ENCODE measurements at regions of chr2 and their contacts with region 1.

Region 1: DNA sequence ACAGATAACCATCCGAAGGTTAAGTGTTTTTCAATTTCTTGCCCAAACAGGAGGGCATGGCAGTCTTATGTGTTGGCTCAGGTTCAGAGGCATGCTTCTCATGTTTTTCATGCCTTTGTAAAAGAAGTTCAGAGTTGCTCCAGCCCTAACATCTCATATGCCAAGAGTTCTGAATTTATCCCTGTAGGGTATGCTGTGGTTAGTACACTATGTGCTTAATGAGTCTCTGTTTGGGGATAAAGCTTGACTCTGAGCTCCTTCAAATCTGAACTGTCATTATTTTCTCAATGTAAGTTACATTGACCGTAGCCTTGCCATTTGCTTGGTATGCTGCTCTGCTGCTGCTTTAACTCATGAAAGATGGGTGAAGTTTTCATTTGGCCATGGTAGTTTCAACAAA is 67.9 kb upstream of the PNPT1 start:
- DNase-seq: no peak
- ATAC-seq: peak in 1 of 2 donors; percentile 63
- H3K4me3 ChIP-seq: no peak overlapping the region
- H3K27ac ChIP-seq: no peak overlapping the region
- H3K4me1 ChIP-seq: no peaks in the 10 kb centered on the region
- H3K27me3 ChIP-seq: no peaks in the 10 kb centered on the region

Region 2: GRCh38 chr2:55672630-55673029 is 88.9 kb before region 1 on chr2:
- intact Hi-C with region 1: no loop called
- DNase-seq: no peak
- ATAC-seq: no peak
- H3K4me3 ChIP-seq: no peak overlapping the region
- H3K27ac ChIP-seq: no peak overlapping the region
- H3K4me1 ChIP-seq: no peaks in the 10 kb centered on the region
- H3K27me3 ChIP-seq: no peaks in the 10 kb centered on the region

Region 3: DNA sequence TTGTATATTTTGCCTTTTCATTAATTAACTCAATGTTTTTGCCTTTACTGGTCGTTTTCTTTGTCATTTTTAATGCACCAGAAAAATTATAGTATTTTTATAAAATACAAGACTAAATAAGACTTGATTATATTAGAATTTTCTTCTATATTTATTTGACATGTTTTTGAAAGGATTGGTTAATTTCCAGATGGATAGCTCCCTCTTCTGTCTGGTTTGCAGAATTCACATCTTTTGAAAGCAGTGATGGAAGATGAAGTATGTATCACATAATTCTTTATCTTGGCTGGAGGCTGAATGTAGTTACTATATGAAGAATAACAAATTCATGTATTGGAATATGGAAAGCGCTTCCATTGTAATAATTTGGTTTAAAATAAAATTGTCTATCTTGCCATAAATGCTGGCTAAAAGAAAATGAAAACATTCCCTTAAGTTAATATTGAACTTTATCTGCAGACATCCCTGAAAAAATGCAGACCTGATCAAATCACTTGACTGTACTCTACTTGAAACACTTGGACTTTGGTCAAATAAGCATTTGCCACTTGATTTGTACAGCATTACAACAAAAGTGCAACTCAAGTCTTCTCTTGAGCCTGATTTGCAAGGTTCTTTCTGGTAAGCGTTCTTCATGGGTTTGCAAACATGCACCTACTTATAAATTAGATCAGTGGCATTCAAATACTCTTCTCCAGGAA is 248.4 kb after region 1 on chr2:
- intact Hi-C with region 1: loop called in 1 of 4 experiments (anchors 10 kb)
- DNase-seq: no peak
- ATAC-seq: no peak
- H3K4me3 ChIP-seq: no peak overlapping the region
- H3K27ac ChIP-seq: no peak overlapping the region
- H3K4me1 ChIP-seq: peaks cover 2% of the 10 kb centered on the region
- H3K27me3 ChIP-seq: no peaks in the 10 kb centered on the region